ENCODE measurements at regions of chr18 and their contacts with region 1.

Region 1: DNA sequence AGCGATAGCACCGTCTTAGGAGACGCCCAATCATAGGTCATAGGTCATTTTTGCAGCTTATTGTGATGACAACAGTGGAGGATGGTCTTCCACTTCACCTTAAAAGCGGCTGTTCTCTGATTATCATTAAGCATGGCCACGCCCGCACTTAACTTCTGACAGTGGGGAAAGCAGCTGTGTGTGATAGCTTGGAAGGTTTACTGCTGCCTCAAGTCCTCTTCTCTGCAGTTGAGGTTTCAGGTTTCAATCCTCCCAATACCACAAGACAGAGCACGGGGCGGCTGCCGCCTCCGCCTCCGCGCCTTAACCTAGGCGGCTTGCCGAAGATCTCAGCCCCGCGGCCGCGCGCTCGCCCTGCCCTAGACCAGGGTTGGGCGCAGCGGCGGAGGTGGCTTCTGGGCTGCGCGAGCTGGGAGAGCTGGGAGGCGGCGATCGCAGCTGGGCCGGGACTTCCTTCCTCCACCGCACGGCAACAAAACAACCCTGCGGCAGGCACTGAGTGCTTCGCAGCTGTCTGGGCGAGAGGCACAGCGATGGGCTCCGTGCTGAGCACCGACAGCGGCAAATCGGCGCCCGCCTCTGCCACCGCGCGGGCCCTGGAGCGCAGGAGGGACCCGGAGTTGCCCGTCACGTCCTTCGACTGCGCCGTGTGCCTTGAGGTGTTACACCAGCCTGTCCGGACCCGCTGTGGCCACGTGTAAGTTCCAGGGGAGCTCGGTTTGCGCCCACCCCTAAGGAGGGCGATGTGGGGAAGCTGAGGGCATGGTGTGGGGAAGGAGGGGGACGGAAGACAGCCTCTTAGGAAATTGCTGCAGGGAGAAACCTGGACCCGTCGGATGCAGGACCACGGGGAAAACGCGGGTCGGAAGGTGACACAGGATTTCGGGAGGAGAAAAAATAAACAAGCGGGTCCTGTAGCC is at the start of gene RNF125:
- DNase-seq: peak; percentile 89
- ATAC-seq: peak; percentile 88
- H3K4me3 Mint-ChIP-seq: peak within 1 kb of the TSS; percentile 91
- H3K27ac Mint-ChIP-seq: peak within 1 kb of the TSS; percentile 95
- H3K4me1 Mint-ChIP-seq: peaks cover 32% of the 10 kb centered on the region
- H3K27me3 Mint-ChIP-seq: peaks cover 15% of the 10 kb centered on the region
- CTCF ChIP-seq: no peak
- total RNA-seq, gene RNF125: 13.8 to 14.9 TPM (median 14.4 TPM) in 3 replicates

Region 2: DNA sequence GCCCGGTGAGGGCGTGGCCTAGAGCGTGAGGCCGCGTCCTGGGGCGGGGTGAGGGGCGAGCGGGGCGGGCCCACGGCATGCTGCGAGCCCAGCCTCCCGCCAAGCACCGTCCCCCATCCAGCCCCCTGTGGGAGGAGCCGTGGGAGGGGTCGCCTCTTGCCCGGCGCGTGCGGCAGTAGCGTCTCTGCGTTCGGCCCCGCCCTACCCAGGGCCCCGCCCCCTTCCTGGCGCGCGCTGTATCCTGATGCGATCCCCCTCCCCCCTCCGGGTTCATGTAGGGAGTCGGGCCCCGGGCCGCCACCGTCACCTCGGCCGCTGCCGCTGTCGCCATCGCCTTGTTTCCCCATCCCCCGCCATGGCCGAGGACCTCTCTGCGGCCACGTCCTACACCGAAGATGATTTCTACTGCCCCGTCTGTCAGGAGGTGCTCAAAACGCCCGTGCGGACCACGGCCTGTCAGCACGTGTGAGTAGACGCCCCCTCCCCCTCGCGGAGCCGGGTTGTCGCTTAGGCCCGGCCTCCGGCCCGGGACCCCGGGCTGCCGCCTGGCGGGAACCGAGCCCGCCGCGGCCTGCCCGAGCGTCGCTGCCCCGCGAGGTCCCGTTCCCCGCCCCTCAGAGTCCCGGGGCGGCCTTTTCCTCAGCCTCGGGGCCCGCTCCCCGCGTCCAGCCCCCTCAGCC is 74.0 kb after region 1 on chr18:
- CTCF ChIA-PET with region 1: no interaction called
- POLR2A ChIA-PET with region 1: interaction called, 15 read pairs
- DNase-seq: peak; percentile 99
- ATAC-seq: peak; percentile 95
- H3K4me3 Mint-ChIP-seq: peak overlapping the region; percentile 92
- H3K27ac Mint-ChIP-seq: peak overlapping the region; percentile 96
- H3K4me1 Mint-ChIP-seq: peaks cover 32% of the 10 kb centered on the region
- H3K27me3 Mint-ChIP-seq: no peaks in the 10 kb centered on the region
- CTCF ChIP-seq: no peak

Measured in WTC11 (cell line).